Naive thymus-derived CD4-positive, alpha-beta T cell (primary cell): ENCODE measurements at regions of chr17 and their contacts with region 1.

Region 1: DNA sequence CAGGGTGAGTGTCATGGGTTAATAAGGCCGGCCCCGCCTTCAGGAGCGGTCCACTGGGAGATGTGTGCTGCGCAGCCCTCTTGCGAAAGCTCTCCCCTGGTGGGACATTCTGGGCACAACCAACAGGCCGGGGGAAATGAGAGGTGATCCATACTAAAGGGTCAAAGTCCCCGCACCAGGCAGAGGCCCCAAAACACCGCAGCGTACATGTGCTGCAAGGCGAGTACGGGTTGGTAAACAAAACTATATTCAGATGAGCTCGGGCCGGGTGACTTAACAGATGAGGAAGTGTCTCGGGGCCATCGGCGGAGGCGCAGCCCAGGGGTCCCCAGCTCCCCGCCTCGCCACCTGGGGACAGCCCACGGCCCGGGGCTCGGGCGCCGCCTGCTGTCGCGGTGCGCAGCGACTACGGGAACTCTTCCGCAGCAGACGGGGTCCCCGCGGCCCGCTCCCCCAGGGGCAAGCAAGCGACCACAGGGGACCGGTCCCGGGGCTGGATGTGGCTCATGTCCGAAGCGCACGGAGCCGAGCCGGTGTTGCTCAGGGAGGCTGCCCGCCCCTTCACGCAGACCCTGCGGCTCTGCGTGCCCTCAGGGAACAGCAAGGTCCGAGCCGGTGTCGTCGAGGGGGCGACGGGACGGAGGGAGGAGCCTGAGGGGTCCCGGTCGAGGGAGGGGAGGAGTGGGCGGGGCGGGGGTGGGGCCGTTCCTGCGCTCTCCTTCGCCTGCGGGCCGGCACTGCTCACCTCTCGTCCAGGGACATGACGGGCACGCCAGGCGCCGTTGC is at the start of gene RAB37:
- DNase-seq: peak in 7 of 9 donors; percentile 35 to 59 (median 46)
- ATAC-seq: peak; percentile 66
- H3K4me3 ChIP-seq: peak within 1 kb of the TSS; percentile 95
- H3K4me3 Mint-ChIP-seq: peak within 1 kb of the TSS; percentile 85 to 97 (median 92)
- H3K27ac ChIP-seq: peak within 1 kb of the TSS; percentile 71
- H3K27ac Mint-ChIP-seq: peak within 1 kb of the TSS; percentile 79 to 99 (median 93)
- H3K4me1 ChIP-seq: peaks cover 39 to 40% of the 10 kb centered on the region in 2 donors
- H3K4me1 Mint-ChIP-seq: peaks cover 43 to 55% (median 52%) of the 10 kb centered on the region in 7 donors
- H3K27me3 ChIP-seq: no peaks in the 10 kb centered on the region
- H3K27me3 Mint-ChIP-seq: peaks cover 0 to 17% (median 0%) of the 10 kb centered on the region in 5 donors
- total RNA-seq, gene RAB37: 23.6 to 58.5 (median 34.4) TPM

Region 2: DNA sequence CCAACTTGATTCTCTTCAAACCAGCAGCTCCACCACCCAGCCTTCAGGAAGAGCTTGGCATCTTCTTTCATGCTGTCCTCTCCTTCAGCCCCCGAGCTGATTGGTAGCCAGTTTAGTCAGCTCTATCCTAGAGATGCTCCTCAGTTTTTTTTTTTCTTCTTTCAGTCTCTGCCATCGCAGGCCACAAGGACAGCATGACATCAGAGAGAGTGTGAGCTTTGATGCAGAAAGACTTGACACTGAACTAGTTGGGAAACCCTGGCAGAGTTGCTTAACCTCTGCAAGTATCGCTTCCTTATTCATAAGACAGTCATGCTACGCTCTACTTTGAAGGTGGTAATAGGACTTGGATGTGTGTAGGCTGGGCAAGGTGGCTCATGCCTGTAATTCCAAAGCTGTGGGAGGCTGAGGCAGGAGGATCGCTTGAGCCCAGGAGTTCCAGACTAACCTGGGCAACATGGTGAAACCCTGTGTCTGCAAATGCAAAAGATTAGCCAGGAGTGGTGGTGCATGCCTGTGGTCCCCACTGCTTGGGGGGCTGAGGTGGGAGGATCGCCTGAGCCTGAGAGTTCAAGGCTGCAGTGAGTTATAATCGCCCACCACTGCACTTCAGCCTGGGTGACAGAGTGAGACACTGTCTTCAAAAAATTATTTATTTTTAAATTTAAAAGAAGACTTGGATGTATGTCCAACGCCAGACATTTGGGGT is 208.1 kb before region 1 on chr17:
- CTCF ChIA-PET with region 1: no interaction called
- POLR2A ChIA-PET with region 1: no interaction called
- intact Hi-C with region 1: no loop called
- DNase-seq: peak in 1 of 9 donors; percentile 12
- ATAC-seq: peak; percentile 64
- H3K4me3 ChIP-seq: no peak overlapping the region
- H3K4me3 Mint-ChIP-seq: no peak overlapping the region
- H3K27ac ChIP-seq: no peak overlapping the region
- H3K27ac Mint-ChIP-seq: no peak overlapping the region
- H3K4me1 ChIP-seq: no peaks in the 10 kb centered on the region
- H3K4me1 Mint-ChIP-seq: peaks cover 3 to 18% (median 6%) of the 10 kb centered on the region in 7 donors
- H3K27me3 ChIP-seq: no peaks in the 10 kb centered on the region
- H3K27me3 Mint-ChIP-seq: peaks cover 23 to 50% (median 32%) of the 10 kb centered on the region in 5 donors

Region 3: GRCh38 chr17:74558882-74559519 is 177.7 kb before region 1 on chr17:
- CTCF ChIA-PET with region 1: no interaction called
- POLR2A ChIA-PET with region 1: no interaction called
- intact Hi-C with region 1: loop called in 1 of 2 experiments (anchors 2 kb)
- DNase-seq: no peak
- ATAC-seq: no peak
- H3K4me3 ChIP-seq: no peak overlapping the region
- H3K4me3 Mint-ChIP-seq: peak overlapping the region in 4 of 10 donors; percentile 24 to 61 (median 40)
- H3K27ac ChIP-seq: no peak overlapping the region
- H3K27ac Mint-ChIP-seq: no peak overlapping the region
- H3K4me1 ChIP-seq: no peaks in the 10 kb centered on the region
- H3K4me1 Mint-ChIP-seq: peaks cover 9 to 21% (median 11%) of the 10 kb centered on the region in 7 donors
- H3K27me3 ChIP-seq: no peaks in the 10 kb centered on the region
- H3K27me3 Mint-ChIP-seq: peaks cover 0 to 22% (median 0%) of the 10 kb centered on the region in 5 donors

Region 4: DNA sequence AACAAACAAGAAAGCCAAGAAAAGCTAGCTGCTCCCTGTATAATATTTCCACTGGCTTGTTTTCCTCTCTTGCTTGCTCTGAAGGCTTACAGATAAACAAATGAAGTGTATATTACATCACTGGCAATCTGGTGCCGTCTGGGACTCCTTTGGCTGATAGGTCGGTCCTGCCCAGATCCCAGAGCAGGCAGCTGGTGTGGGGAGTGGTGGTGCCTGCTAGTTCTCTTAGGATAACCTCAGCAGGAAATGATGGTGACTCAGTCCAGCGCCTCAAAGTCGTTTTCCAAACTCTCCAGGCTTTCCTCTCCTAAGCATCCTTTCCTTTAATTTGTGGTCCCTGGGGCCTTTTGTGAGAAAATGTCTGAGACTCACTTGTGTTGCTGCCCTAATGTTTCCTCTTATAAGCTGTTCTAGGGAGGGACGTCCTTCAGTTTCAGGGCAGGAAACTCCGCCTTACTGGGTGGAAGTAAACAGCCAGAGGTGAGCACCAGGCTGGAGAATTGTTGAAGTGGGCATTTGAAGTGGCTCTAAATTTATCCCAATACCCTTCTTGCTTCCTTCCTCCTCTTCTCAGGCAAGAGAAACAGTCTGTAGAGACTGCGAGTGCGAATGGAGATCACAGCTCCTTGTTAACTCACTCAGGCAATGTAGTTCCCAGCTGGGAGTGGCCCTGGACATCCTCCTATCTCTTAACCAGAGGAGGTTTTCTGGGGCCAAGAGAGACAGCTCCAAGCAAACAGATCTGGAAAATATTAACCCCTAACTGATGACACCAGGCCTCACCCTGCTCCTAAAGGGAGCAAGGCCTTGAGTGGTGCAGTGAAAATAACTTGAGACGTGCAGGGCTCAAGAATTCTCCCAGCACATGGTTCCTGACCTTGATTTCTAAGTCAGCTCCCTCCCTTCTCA is 58.9 kb before region 1 on chr17:
- CTCF ChIA-PET with region 1: interaction called, 28 read pairs
- POLR2A ChIA-PET with region 1: interaction called, 19 read pairs
- intact Hi-C with region 1: loop called (anchors 5 to 10 kb)
- DNase-seq: peak in 4 of 9 donors; percentile 6 to 25 (median 11)
- ATAC-seq: peak; percentile 46
- H3K4me3 ChIP-seq: no peak overlapping the region
- H3K4me3 Mint-ChIP-seq: peak overlapping the region; percentile 1 to 76 (median 46)
- H3K27ac ChIP-seq: no peak overlapping the region
- H3K27ac Mint-ChIP-seq: peak overlapping the region; percentile 51 to 84 (median 67)
- H3K4me1 ChIP-seq: peaks cover 6 to 15% of the 10 kb centered on the region in 2 donors
- H3K4me1 Mint-ChIP-seq: peaks cover 16 to 28% (median 23%) of the 10 kb centered on the region in 7 donors
- H3K27me3 ChIP-seq: peaks cover 2 to 3% of the 10 kb centered on the region in 2 donors
- H3K27me3 Mint-ChIP-seq: peaks cover 14 to 66% (median 19%) of the 10 kb centered on the region in 5 donors

Region 5: DNA sequence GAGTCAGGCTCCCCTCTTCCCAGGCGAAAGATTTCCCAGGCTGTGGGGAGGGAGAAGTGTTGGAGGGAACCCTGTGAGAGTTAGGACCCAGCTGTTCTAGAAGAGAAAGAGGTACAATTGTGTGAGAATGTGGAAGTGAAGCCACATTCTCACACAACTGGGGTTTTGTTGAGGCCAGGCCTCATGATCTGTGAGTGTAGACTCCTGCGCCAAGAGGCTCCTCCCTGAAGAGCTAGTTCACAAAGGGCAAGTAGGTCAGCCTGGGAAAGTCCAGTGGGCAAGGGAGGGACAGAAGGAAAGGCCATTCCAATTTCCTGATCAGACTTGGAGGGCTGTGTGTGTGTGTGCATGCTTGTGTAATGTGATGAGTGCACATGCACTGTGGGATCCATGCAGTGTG is 39.2 kb before region 1 on chr17:
- CTCF ChIA-PET with region 1: no interaction called
- POLR2A ChIA-PET with region 1: no interaction called
- intact Hi-C with region 1: no loop called
- DNase-seq: no peak
- ATAC-seq: no peak
- H3K4me3 ChIP-seq: no peak overlapping the region
- H3K4me3 Mint-ChIP-seq: no peak overlapping the region
- H3K27ac ChIP-seq: no peak overlapping the region
- H3K27ac Mint-ChIP-seq: no peak overlapping the region
- H3K4me1 ChIP-seq: no peaks in the 10 kb centered on the region
- H3K4me1 Mint-ChIP-seq: no peaks in the 10 kb centered on the region
- H3K27me3 ChIP-seq: no peaks in the 10 kb centered on the region
- H3K27me3 Mint-ChIP-seq: peaks cover 0 to 40% (median 6%) of the 10 kb centered on the region in 5 donors

Region 6: GRCh38 chr17:74759243-74759801 is 22.6 kb after region 1 on chr17:
- CTCF ChIA-PET with region 1: interaction called, 9 read pairs
- POLR2A ChIA-PET with region 1: interaction called, 20 read pairs
- intact Hi-C with region 1: no loop called
- DNase-seq: peak in 6 of 9 donors; percentile 47 to 60 (median 56)
- ATAC-seq: peak; percentile 86
- H3K4me3 ChIP-seq: peak overlapping the region; percentile 60
- H3K4me3 Mint-ChIP-seq: peak overlapping the region; percentile 82 to 92 (median 84)
- H3K27ac ChIP-seq: peak overlapping the region; percentile 49
- H3K27ac Mint-ChIP-seq: peak overlapping the region; percentile 75 to 97 (median 90)
- H3K4me1 ChIP-seq: peaks cover 69 to 82% of the 10 kb centered on the region in 2 donors
- H3K4me1 Mint-ChIP-seq: peaks cover 44 to 78% (median 62%) of the 10 kb centered on the region in 7 donors
- H3K27me3 ChIP-seq: no peaks in the 10 kb centered on the region
- H3K27me3 Mint-ChIP-seq: no peaks in the 10 kb centered on the region

Region 7: DNA sequence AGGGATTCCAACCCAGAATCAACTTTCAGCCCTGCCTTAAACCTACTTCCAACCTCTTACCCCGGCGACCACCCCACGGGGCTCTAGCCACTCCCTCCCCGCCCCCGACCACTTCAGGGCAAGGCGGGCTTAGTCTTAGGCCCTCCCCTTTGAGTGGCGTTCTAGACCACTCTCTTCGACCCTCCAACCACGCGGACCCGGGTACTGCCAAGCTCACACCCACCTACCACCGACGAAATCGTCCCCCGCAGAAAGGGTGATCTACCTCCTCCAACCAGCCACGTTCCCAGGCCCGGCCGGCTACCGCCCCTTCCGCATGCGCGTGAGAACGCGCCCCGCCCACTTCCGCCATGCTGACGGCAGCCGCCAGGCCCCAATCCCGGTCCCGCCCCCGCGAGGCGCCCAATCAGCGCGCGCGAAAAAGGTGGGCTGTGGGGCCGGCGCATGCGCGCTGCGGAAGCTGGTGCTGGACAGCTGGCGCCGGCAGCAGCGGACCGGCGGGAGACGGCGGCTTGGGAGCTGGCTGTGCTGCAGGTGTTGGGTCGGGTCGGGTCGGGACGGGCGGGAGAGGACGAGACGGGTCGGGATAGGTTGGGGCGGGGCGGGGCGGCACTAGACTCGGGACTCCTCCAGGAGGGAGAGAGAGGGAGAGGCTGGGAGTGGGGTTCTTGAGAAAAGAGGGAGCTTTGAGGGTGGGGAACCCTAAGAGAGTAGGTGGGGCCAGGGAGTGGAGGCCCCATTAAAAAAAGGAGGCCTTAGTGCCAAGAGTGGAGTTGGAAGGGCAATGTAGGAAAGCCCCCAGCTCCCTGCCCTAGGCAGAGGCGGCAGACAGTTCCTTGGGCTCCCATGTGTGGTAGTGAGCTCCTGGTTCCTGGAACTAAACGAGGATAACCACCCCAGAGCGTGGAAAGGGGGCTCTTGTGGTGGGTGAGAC is 39.6 kb after region 1 on chr17 and contains the start of gene NAT9:
- CTCF ChIA-PET with region 1: interaction called, 26 read pairs
- POLR2A ChIA-PET with region 1: interaction called, 32 read pairs
- intact Hi-C with region 1: no loop called
- DNase-seq: peak; percentile 95 to 100 (median 98)
- ATAC-seq: peak; percentile 86
- H3K4me3 ChIP-seq: peak within 1 kb of the TSS; percentile 91
- H3K4me3 Mint-ChIP-seq: peak within 1 kb of the TSS; percentile 96 to 100 (median 98)
- H3K27ac ChIP-seq: peak within 1 kb of the TSS; percentile 78
- H3K27ac Mint-ChIP-seq: peak within 1 kb of the TSS; percentile 91 to 99 (median 96)
- H3K4me1 ChIP-seq: peaks cover 49 to 51% of the 10 kb centered on the region in 2 donors
- H3K4me1 Mint-ChIP-seq: peaks cover 32 to 76% (median 66%) of the 10 kb centered on the region in 7 donors
- H3K27me3 ChIP-seq: no peaks in the 10 kb centered on the region
- H3K27me3 Mint-ChIP-seq: no peaks in the 10 kb centered on the region
- total RNA-seq, gene NAT9: 41.4 to 78.8 (median 56.9) TPM

Region 8: DNA sequence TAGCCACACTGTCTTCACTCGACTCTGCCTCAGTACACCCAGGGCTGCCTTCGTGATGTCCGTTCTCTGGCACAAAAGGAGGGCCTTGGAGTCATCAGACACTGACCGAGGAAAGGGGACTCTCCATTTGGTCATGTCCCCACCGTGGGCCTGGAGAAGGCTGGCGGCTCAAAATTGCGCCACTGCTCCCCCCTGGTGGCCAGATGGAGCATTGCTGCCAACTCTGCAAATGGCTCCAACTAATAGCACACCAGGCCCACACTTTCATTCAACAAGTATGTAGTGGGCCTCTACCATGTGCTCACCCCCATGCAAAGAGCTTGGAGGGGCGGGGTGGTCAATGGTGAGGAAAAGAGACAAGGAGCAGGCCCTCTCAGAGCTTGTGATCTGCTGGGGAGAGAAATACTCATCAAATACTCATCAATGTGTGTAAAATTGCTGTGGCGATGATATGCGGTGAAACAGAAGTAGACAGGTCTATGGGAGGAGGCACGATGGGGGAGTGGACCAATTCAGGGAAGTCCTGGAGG is 128.2 kb after region 1 on chr17:
- CTCF ChIA-PET with region 1: interaction called, 26 read pairs
- POLR2A ChIA-PET with region 1: interaction called, 4 read pairs
- intact Hi-C with region 1: no loop called
- DNase-seq: peak; percentile 35 to 73 (median 59)
- ATAC-seq: peak; percentile 74
- H3K4me3 ChIP-seq: no peak overlapping the region
- H3K4me3 Mint-ChIP-seq: peak overlapping the region in 1 of 10 donors; percentile 35
- H3K27ac ChIP-seq: no peak overlapping the region
- H3K27ac Mint-ChIP-seq: peak overlapping the region in 2 of 9 donors; percentile 16 to 47
- H3K4me1 ChIP-seq: peaks cover 12 to 14% of the 10 kb centered on the region in 2 donors
- H3K4me1 Mint-ChIP-seq: peaks cover 0 to 23% (median 16%) of the 10 kb centered on the region in 7 donors
- H3K27me3 ChIP-seq: peaks cover 4 to 7% of the 10 kb centered on the region in 2 donors
- H3K27me3 Mint-ChIP-seq: peaks cover 3 to 24% (median 11%) of the 10 kb centered on the region in 5 donors